ENCODE measurements at regions of chr12 and their contacts with region 1.

Region 1: DNA sequence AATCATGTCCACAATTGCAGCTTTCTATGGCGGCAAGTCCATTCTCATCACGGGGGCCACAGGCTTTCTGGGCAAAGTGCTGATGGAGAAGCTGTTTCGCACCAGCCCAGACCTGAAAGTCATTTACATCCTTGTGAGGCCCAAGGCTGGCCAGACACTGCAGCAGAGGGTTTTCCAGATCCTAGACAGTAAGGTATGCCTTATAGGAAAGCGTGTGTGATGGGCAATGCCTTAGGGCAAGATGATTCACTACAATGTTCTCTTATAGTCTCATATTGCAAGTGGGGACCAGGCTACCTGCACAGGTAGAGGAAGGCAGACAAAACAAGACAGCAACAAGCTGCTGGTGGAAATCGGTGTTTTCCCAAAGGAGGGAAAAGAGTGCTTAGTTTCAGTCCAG is 110.5 kb downstream of the ERGIC2 start:
- DNase-seq: peak; percentile 14
- H3K4me3 ChIP-seq: no peak overlapping the region
- H3K27ac ChIP-seq: no peak overlapping the region
- H3K4me1 ChIP-seq: no peaks in the 10 kb centered on the region
- H3K27me3 ChIP-seq: no peaks in the 10 kb centered on the region
- CTCF ChIP-seq: no peak

Region 2: DNA sequence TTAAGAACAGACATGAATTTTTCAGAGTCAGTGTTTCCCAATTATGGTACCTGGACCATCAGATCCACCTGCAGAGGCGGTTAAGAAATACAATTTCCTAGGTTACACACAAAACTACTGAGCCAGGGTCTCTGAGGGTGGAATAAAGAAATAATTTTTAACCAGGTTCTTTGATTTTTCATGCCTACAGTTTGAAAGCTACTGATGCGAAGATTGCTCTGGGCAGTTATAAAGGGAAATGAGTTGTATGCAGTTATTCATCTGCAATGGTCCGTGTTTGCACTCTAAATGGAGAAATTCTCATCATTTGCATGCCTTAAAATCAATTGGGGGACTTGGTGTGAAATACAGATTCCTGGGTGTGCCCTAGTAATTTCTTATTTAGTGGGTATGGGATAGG is 20.8 kb after region 1 on chr12:
- CTCF ChIA-PET with region 1: interaction called, 11 read pairs
- dilution Hi-C with region 1: no loop called
- in situ Hi-C with region 1: no loop called
- intact Hi-C with region 1: no loop called
- DNase-seq: no peak
- H3K4me3 ChIP-seq: no peak overlapping the region
- H3K27ac ChIP-seq: no peak overlapping the region
- H3K4me1 ChIP-seq: no peaks in the 10 kb centered on the region
- H3K27me3 ChIP-seq: no peaks in the 10 kb centered on the region
- CTCF ChIP-seq: no peak

Region 3: DNA sequence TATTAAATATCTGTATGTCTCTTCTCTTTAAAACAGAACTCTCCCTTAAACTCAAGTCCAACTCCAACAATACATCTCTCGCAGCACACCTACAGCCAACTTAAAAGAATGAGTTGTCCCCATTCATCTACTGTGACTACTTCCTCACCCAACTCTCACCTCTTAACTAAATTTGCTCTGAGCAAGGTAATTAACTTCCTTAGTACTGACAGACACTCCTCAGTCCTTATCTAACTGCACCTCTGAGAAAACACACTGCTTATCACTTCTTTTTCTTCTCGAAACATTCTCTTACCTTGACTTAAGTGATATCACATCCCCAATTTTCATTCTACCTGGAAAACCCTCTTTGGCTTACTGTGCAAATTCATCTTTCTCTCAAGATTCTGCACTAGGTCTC is 103.6 kb after region 1 on chr12:
- CTCF ChIA-PET with region 1: no interaction called
- dilution Hi-C with region 1: no loop called
- in situ Hi-C with region 1: no loop called
- intact Hi-C with region 1: no loop called
- DNase-seq: no peak
- H3K4me3 ChIP-seq: no peak overlapping the region
- H3K27ac ChIP-seq: no peak overlapping the region
- H3K4me1 ChIP-seq: no peaks in the 10 kb centered on the region
- H3K27me3 ChIP-seq: no peaks in the 10 kb centered on the region
- CTCF ChIP-seq: no peak

Measured in mammary epithelial cell (primary cell).